HCT116 (cell line): ENCODE measurements at regions of chr17 and their contacts with region 1.

Region 1: DNA sequence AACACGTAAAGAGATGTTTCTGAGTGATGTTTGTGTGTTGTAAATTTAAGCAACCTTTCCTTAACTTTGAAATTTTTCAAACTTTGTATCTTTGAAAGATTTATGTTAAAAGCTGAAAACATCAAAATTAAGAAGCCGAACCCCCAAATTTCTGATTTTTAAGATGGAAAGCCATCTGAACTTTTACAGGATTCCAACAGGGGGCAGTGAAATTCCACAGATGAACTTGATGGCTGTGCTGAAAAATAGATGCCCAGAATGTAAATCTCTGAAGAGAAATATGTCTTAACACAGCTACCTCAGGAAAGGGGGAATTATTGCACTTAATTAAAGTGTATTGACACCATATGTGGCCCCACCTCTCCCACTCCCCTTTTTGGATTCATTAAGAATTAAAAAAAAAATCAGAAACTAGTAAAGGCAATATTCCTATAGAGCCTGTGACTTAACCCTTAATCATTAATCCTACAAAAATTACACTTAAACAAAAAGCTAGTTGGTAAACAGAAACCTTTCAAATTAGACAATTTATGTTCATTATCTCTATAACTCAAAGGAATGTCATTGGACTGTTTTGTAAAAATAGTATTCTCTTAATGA is 597.9 kb downstream of the KCNJ2 start:
- DNase-seq: peak; percentile 42
- ATAC-seq: peak; percentile 42; the same call in 1 of the 2 replicates
- H3K4me3 ChIP-seq: no peak overlapping the region
- H3K27ac ChIP-seq: no peak overlapping the region
- H3K4me1 ChIP-seq: no peaks in the 10 kb centered on the region
- H3K27me3 ChIP-seq: no peaks in the 10 kb centered on the region
- CTCF ChIP-seq: peak; percentile 72 to 95 (median 76); a peak in 5 of 6 replicates
- POLR2A ChIP-seq: no peak
- RAD21 ChIP-seq: peak; percentile 91

Region 2: GRCh38 chr17:70750983-70751382 is 16.2 kb before region 1 on chr17:
- CTCF ChIA-PET with region 1: interaction called, 11 read pairs
- POLR2A ChIA-PET with region 1: interaction called, 4 read pairs
- RAD21 ChIA-PET with region 1: no interaction called
- intact Hi-C with region 1: no loop called
- DNase-seq: no peak
- ATAC-seq: no peak
- H3K4me3 ChIP-seq: no peak overlapping the region
- H3K27ac ChIP-seq: no peak overlapping the region
- H3K4me1 ChIP-seq: no peaks in the 10 kb centered on the region
- H3K27me3 ChIP-seq: no peaks in the 10 kb centered on the region
- CTCF ChIP-seq: no peak
- POLR2A ChIP-seq: no peak
- RAD21 ChIP-seq: no peak

Region 3: DNA sequence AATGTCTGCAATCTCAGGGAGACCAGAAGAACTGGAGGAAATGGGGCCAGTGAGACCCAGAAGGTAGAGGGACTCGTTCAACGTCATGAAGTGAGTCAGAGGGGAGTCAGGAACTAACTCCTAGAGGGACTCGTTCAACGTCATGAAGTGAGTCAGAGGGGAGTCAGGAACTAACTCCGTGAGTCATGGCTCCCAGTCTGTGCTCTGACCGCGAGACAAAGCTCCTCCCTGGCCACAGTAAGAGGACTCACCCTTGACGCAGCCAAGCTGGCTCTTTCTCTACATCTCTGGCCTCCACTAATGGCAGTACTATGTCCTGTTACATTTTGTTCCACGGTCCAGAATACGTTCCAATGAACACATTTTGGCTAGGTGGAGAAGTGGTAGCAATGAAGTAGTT is 304.6 kb after region 1 on chr17:
- CTCF ChIA-PET with region 1: interaction called, 17 read pairs
- POLR2A ChIA-PET with region 1: interaction called, 3 read pairs
- RAD21 ChIA-PET with region 1: no interaction called
- intact Hi-C with region 1: no loop called
- DNase-seq: peak; percentile 98
- ATAC-seq: peak; percentile 100
- H3K4me3 ChIP-seq: peak overlapping the region in 1 of 2 experiments; percentile 34; a peak in 2 of 4 replicates
- H3K27ac ChIP-seq: peak overlapping the region; percentile 32; the same call in 1 of the 2 replicates
- H3K4me1 ChIP-seq: peaks cover 6 to 22% of the 10 kb centered on the region in 2 experiments; a peak in 3 of 4 replicates
- H3K27me3 ChIP-seq: no peaks in the 10 kb centered on the region
- CTCF ChIP-seq: no peak
- POLR2A ChIP-seq: peak; percentile 51
- RAD21 ChIP-seq: no peak

Region 4: GRCh38 chr17:71089431-71089830 is 322.2 kb after region 1 on chr17:
- CTCF ChIA-PET with region 1: interaction called, 112 read pairs
- POLR2A ChIA-PET with region 1: no interaction called
- RAD21 ChIA-PET with region 1: interaction called, 9 to 12 read pairs
- intact Hi-C with region 1: loop called (anchors 1 kb)
- DNase-seq: no peak
- ATAC-seq: no peak
- H3K4me3 ChIP-seq: no peak overlapping the region
- H3K27ac ChIP-seq: no peak overlapping the region
- H3K4me1 ChIP-seq: peaks cover 0 to 6% of the 10 kb centered on the region in 2 experiments; a peak in 1 of 4 replicates
- H3K27me3 ChIP-seq: no peaks in the 10 kb centered on the region
- CTCF ChIP-seq: no peak
- POLR2A ChIP-seq: no peak
- RAD21 ChIP-seq: no peak

Region 5: DNA sequence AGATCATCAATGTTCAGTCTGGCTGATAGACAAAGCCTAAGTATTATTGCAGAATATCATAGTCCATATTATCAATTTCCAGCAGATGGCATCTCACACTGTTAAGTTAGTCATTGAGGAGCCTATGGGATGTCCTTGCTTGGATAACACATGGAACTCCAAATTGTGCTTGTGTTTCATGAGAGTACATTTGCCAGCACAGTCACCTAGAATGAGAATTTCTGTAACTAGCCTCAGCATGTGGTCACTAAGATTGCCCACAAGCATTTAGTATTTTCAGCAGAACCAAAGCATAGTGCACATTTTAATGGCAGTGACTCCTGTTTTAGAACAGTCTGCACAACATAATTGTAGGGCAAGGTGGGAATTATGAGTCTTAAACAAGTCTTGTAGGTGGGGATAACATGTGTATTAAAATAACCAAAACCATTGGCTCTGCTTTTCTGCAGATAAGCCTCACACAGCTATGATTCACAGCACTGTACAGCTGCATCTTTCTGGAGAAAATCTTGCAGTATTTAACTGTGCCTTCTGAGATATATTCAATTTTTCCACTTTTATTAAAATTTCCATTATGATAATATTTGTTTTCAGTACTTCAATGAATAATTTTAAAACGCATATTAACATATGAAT is 470.8 kb after region 1 on chr17:
- CTCF ChIA-PET with region 1: interaction called, 3 read pairs
- POLR2A ChIA-PET with region 1: no interaction called
- RAD21 ChIA-PET with region 1: no interaction called
- intact Hi-C with region 1: loop called (anchors 5 kb)
- DNase-seq: peak; percentile 57
- ATAC-seq: peak; percentile 96
- H3K4me3 ChIP-seq: no peak overlapping the region
- H3K27ac ChIP-seq: no peak overlapping the region
- H3K4me1 ChIP-seq: no peaks in the 10 kb centered on the region
- H3K27me3 ChIP-seq: no peaks in the 10 kb centered on the region
- CTCF ChIP-seq: peak; percentile 38 to 66 (median 64)
- POLR2A ChIP-seq: no peak
- RAD21 ChIP-seq: peak; percentile 89

Region 6: GRCh38 chr17:71472809-71473789 is 705.9 kb after region 1 on chr17:
- CTCF ChIA-PET with region 1: interaction called, 24 read pairs
- POLR2A ChIA-PET with region 1: no interaction called
- RAD21 ChIA-PET with region 1: no interaction called
- intact Hi-C with region 1: no loop called
- DNase-seq: peak; percentile 86
- ATAC-seq: peak; percentile 99
- H3K4me3 ChIP-seq: no peak overlapping the region
- H3K27ac ChIP-seq: no peak overlapping the region
- H3K4me1 ChIP-seq: peaks cover 0 to 11% of the 10 kb centered on the region in 2 experiments; a peak in 2 of 4 replicates
- H3K27me3 ChIP-seq: no peaks in the 10 kb centered on the region
- CTCF ChIP-seq: peak; percentile 79 to 93 (median 88)
- POLR2A ChIP-seq: no peak
- RAD21 ChIP-seq: peak; percentile 89

Region 7: GRCh38 chr17:72539981-72540897 is 1773.0 kb after region 1 on chr17:
- CTCF ChIA-PET with region 1: interaction called, 21 read pairs
- POLR2A ChIA-PET with region 1: no interaction called
- RAD21 ChIA-PET with region 1: no interaction called
- intact Hi-C with region 1: loop called (anchors 2 kb)
- DNase-seq: peak; percentile 45
- ATAC-seq: peak; percentile 93
- H3K4me3 ChIP-seq: peak overlapping the region; percentile 19 to 23
- H3K27ac ChIP-seq: peak overlapping the region; percentile 34
- H3K4me1 ChIP-seq: peaks cover 7 to 18% of the 10 kb centered on the region in 2 experiments
- H3K27me3 ChIP-seq: no peaks in the 10 kb centered on the region
- CTCF ChIP-seq: peak; percentile 45 to 91 (median 78); a peak in 5 of 6 replicates
- POLR2A ChIP-seq: no peak
- RAD21 ChIP-seq: peak; percentile 95